PC-9 (cell line): ENCODE measurements at regions of chr13 and their contacts with region 1.

Region 1: DNA sequence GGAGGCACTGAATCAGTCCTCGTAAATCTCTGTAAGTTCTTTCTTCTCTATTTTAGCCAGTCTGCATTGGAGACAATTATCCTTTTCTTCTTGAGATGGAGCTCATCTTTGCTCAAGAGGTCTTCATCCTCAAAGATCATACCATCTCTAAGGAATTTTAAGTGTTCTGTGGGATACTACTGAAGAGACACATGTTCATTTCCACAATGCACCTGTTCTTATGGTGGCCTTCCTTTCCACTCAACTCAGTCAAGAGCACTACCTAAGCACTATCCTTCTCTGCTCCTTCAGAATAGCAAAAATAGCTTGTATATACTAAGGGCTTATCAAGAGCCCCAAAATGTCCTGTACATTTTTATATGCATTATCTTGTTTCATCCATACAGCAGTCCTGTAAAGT is 214.0 kb downstream of the KLF5 start:
- DNase-seq: no peak
- H3K4me3 ChIP-seq: no peak overlapping the region
- H3K27ac ChIP-seq: no peak overlapping the region
- H3K4me1 ChIP-seq: no peaks in the 10 kb centered on the region
- H3K27me3 ChIP-seq: no peaks in the 10 kb centered on the region
- CTCF ChIP-seq: no peak

Region 2: GRCh38 chr13:73259061-73260017 is 13.5 kb before region 1 on chr13:
- CTCF ChIA-PET with region 1: no interaction called
- POLR2A ChIA-PET with region 1: interaction called, 10 read pairs
- intact Hi-C with region 1: no loop called
- DNase-seq: no peak
- H3K4me3 ChIP-seq: no peak overlapping the region
- H3K27ac ChIP-seq: no peak overlapping the region
- H3K4me1 ChIP-seq: peaks cover 5% of the 10 kb centered on the region
- H3K27me3 ChIP-seq: no peaks in the 10 kb centered on the region
- CTCF ChIP-seq: no peak